Lower leg skin (tissue), 4 donors: ENCODE measurements at regions of chr9 and their contacts with region 1.

Region 1: GRCh38 chr9:131762356-131762932 is 22.6 kb upstream of the RAPGEF1 start:
- DNase-seq: peak; percentile 34 to 94
- H3K4me3 ChIP-seq: no peak overlapping the region
- CTCF ChIP-seq: peak in 1 of 3 donors; percentile 82
- POLR2A ChIP-seq: no peak

Region 2: GRCh38 chr9:131502781-131503625 is 259.4 kb before region 1 on chr9 and contains the start of gene POMT1:
- intact Hi-C with region 1: no loop called
- DNase-seq: peak; percentile 72 to 97
- H3K4me3 ChIP-seq: peak within 1 kb of the TSS; percentile 71
- CTCF ChIP-seq: no peak
- POLR2A ChIP-seq: no peak
- total RNA-seq, gene POMT1: 23.9 to 29.0 (median 26.6) TPM

Region 3: DNA sequence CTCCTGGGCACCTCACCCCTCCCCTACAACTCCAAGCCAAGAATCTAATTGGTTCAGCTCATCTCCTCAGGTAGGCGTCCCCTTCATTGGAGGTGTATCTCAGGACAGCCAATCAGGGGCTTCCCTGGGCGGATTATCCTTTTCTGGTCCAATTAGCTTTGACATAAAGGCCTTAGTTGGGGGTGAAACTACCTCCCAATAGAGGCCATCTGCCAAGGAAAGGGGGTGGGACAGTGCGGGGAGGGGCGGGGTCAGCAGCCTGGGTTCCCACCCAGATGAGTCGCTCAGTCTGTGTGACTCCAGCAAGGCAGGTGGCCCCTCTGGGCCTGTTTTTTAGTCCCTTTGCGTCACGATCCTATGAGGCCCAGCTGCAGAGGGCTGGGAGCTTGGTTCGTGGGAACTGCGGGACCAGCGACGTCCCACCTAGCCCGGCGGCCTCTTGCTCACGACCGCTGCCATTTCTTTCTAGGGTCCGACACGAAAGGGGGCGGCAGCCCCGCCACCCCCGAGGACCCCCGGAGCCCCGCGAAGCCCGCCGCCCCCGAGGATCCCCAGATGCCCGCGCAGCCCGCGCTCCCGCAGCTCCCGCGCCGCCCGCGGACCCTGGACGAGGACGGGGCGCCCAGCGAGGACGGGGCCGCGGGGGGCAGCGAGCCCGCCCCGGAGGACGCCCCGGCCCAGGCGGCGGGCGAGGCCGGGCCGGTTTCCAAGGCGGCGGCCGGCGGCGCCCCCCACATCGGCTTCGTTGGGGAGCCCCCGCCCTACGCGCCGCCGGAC is 208.2 kb before region 1 on chr9:
- intact Hi-C with region 1: no loop called
- DNase-seq: no peak
- H3K4me3 ChIP-seq: no peak overlapping the region
- CTCF ChIP-seq: no peak
- POLR2A ChIP-seq: no peak

Region 4: GRCh38 chr9:131773911-131774379 is 11.5 kb after region 1 on chr9:
- intact Hi-C with region 1: no loop called
- DNase-seq: no peak
- H3K4me3 ChIP-seq: no peak overlapping the region
- CTCF ChIP-seq: no peak
- POLR2A ChIP-seq: no peak

Region 5: GRCh38 chr9:132235946-132236661 is 473.7 kb after region 1 on chr9:
- intact Hi-C with region 1: loop called (anchors 5 kb)
- DNase-seq: peak; percentile 58 to 94
- H3K4me3 ChIP-seq: no peak overlapping the region
- CTCF ChIP-seq: no peak
- POLR2A ChIP-seq: no peak

Region 6: DNA sequence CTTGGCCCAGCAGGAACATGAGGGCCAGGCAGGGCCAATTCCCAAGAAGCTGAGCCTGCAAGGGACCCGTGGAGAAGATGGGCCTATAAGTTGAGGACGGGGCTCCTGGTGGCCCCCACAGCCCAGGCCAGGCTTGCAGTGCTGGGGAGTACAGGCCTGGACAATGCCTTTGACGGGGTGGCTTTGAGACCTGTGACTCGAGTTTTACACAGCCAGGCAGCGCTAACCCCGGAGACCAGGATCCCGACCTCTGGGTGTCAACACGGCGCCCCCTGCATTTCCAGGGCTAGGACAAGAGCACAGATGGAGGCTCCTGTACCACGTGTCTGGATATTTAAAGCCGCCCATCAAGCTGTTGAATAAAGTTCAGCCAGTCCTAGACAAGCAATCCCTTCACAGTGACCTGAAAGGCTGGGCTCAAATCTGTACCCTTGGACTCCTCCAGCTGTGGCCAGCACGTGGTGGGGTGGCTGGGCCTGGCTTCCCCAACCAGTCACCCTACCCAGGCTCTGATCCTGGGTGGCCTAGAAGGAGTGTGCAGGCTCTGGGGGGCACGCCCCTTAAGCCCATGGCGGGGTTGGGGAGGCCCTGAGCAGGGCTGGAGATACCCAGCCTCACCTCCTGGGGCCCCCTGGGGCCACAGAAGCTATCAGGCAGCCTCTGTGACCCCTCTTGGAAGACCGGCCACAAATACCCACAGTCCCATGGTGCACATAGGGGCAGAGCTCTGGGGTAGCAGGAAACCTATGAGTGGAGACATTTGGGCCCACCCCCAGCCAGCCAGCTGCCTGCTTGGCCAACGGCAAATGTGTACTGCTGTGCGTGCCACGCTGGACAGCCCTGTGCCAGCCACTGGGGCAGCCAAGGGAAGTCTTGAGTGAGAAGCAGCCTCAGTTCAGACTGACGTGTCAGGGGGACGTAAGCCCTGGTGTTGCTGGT is 488.1 kb after region 1 on chr9:
- intact Hi-C with region 1: loop called (anchors 5 kb)
- DNase-seq: no peak
- H3K4me3 ChIP-seq: no peak overlapping the region
- CTCF ChIP-seq: no peak
- POLR2A ChIP-seq: no peak